ENCODE measurements at regions of chr15 and their contacts with region 1.

Region 1: GRCh38 chr15:59622289-59622688 is 10.7 kb downstream of the GCNT3 start:
- DNase-seq: peak; percentile 86 to 96
- ATAC-seq: peak; percentile 92 to 96
- H3K4me3 ChIP-seq: no peak overlapping the region
- H3K27ac ChIP-seq: no peak overlapping the region; a peak in 2 of 6 replicates
- H3K4me1 ChIP-seq: peaks cover 21% of the 10 kb centered on the region
- CTCF ChIP-seq: peak; percentile 74
- EP300 ChIP-seq: no peak
- POLR2A ChIP-seq: no peak
- RAD21 ChIP-seq: peak; percentile 85 to 91

Region 2: GRCh38 chr15:59096429-59096828 is 525.9 kb before region 1 on chr15:
- CTCF ChIA-PET with region 1: no interaction called
- POLR2A ChIA-PET with region 1: no interaction called
- DNase-seq: no peak
- ATAC-seq: no peak
- H3K4me3 ChIP-seq: no peak overlapping the region
- H3K27ac ChIP-seq: no peak overlapping the region
- H3K4me1 ChIP-seq: no peaks in the 10 kb centered on the region
- CTCF ChIP-seq: no peak
- EP300 ChIP-seq: no peak
- POLR2A ChIP-seq: no peak
- RAD21 ChIP-seq: no peak

Region 3: GRCh38 chr15:59313641-59314332 is 308.5 kb before region 1 on chr15:
- CTCF ChIA-PET with region 1: no interaction called
- POLR2A ChIA-PET with region 1: no interaction called
- DNase-seq: peak; percentile 67 to 77
- ATAC-seq: peak; percentile 66 to 81
- H3K4me3 ChIP-seq: no peak overlapping the region
- H3K27ac ChIP-seq: peak overlapping the region; percentile 68 to 85
- H3K4me1 ChIP-seq: peaks cover 97% of the 10 kb centered on the region
- CTCF ChIP-seq: no peak
- EP300 ChIP-seq: no peak
- POLR2A ChIP-seq: no peak
- RAD21 ChIP-seq: 0 out of 5 replicates have a peak, but pooled peaks of 1 of the 2 experiments have one; percentile 13

Region 4: GRCh38 chr15:59492389-59493377 is 129.6 kb before region 1 on chr15:
- CTCF ChIA-PET with region 1: no interaction called
- POLR2A ChIA-PET with region 1: no interaction called
- DNase-seq: peak; percentile 61 to 81
- ATAC-seq: peak; percentile 95 to 98
- H3K4me3 ChIP-seq: no peak overlapping the region
- H3K27ac ChIP-seq: peak overlapping the region; percentile 55 to 71
- H3K4me1 ChIP-seq: peaks cover 9% of the 10 kb centered on the region
- CTCF ChIP-seq: peak; percentile 98
- EP300 ChIP-seq: no peak
- POLR2A ChIP-seq: no peak
- RAD21 ChIP-seq: peak; percentile 100

Region 5: GRCh38 chr15:59537403-59537802 is 84.9 kb before region 1 on chr15:
- CTCF ChIA-PET with region 1: interaction called, 154 read pairs
- POLR2A ChIA-PET with region 1: interaction called, 5 read pairs
- DNase-seq: no peak
- ATAC-seq: no peak
- H3K4me3 ChIP-seq: no peak overlapping the region
- H3K27ac ChIP-seq: no peak overlapping the region
- H3K4me1 ChIP-seq: peaks cover 13% of the 10 kb centered on the region; the same call in 2 of the 3 replicates
- CTCF ChIP-seq: no peak
- EP300 ChIP-seq: no peak
- POLR2A ChIP-seq: no peak
- RAD21 ChIP-seq: no peak

Region 6: DNA sequence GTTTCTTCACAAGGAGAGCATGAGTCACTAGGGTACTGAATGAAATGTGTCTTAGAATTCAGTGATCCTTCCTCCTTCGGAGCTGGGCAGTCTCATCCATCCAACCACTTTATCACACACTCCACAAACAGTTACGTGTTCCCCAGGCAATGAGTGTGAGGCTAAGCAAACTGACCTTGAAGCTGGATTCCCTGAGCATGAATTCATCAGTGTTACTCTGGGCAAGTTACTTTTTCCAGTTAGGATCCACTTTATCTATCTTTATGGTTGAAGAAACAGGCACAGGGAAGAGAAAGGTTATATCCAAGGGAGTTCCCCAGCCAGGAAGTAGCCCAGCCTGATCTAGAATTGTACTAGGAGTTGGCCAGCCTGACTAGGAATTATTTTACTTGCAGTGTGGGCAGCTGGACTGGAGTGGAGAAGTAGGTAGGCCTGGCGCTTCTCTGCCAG is 27.8 kb before region 1 on chr15:
- CTCF ChIA-PET with region 1: interaction called, 14 read pairs
- POLR2A ChIA-PET with region 1: interaction called, 3 read pairs
- DNase-seq: peak; percentile 97 to 98
- ATAC-seq: peak; percentile 94 to 95
- H3K4me3 ChIP-seq: no peak overlapping the region
- H3K27ac ChIP-seq: peak overlapping the region; percentile 86 to 92
- H3K4me1 ChIP-seq: peaks cover 40% of the 10 kb centered on the region
- CTCF ChIP-seq: no peak
- EP300 ChIP-seq: peak in 1 of 2 experiments; percentile 47; a peak in 1 of 5 replicates
- POLR2A ChIP-seq: no peak
- RAD21 ChIP-seq: peak; percentile 15 to 42; a peak in 3 of 5 replicates

Region 7: DNA sequence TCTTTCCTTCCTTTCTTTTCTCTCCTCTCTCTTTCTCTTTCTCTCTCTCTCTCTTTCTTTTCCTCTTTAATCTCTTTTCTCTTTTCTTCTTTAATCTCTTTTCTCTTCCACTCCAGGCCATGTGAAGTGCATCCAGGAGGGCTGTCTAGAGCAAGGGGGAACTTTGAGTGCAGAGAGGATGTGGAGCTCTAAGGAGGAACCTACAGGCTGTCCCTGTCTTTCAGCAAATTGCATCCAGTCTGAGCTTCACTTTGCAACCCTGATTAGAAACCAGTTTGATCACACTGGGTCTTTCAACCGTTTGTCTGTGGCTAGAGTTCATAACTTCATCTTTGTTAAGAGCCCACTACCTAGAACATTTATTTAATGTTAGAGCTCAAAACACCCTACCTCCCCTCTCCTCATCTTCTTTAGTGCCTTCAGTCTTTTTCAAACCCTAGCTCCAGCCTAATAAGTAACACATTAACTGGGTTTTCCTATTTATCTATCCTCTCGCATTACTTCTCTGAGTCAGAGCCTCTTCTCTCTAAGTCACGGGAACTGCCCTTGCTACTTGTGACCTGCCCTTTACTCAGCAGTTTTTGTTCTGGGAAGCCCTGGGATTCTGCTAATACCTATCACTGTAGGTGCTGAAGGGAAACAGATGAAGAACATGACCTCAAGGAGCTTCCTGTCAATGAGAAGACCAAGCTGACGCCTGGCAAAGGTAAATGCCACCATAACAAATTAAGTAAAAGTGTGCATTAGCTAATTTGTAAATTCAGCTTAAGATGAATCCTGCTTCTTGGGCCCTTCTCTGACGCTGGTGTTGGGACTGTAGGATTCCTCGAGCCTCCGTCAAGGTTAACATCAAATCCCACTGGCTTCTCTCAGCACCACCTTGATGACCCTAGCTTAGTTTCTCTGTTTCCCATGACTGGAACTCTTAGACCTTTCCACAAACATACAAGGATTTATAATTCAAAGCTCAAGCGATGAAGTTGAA is 10.7 kb before region 1 on chr15 and contains the start of gene GCNT3:
- CTCF ChIA-PET with region 1: interaction called, 40 read pairs
- POLR2A ChIA-PET with region 1: interaction called, 5 read pairs
- DNase-seq: peak; percentile 96 to 97
- ATAC-seq: peak; percentile 93 to 95
- H3K4me3 ChIP-seq: peak within 1 kb of the TSS; percentile 65
- H3K27ac ChIP-seq: peak within 1 kb of the TSS; percentile 95 to 96
- H3K4me1 ChIP-seq: peaks cover 39% of the 10 kb centered on the region
- CTCF ChIP-seq: no peak
- EP300 ChIP-seq: peak in 1 of 2 experiments; percentile 45; a peak in 1 of 5 replicates
- POLR2A ChIP-seq: peak; percentile 30
- RAD21 ChIP-seq: 0 out of 5 replicates have a peak, but pooled peaks of 1 of the 2 experiments have one; percentile 20
- polyA plus RNA-seq, gene GCNT3: 134 and 153 TPM in 2 replicates

Region 8: GRCh38 chr15:59632714-59633113 is 10.4 kb after region 1 on chr15:
- CTCF ChIA-PET with region 1: interaction called, 72 read pairs
- POLR2A ChIA-PET with region 1: interaction called, 3 read pairs
- DNase-seq: peak; percentile 54 to 68
- ATAC-seq: peak; percentile 90
- H3K4me3 ChIP-seq: no peak overlapping the region
- H3K27ac ChIP-seq: no peak overlapping the region
- H3K4me1 ChIP-seq: peaks cover 7% of the 10 kb centered on the region; the same call in 1 of the 3 replicates
- CTCF ChIP-seq: peak; percentile 63
- EP300 ChIP-seq: no peak
- POLR2A ChIP-seq: no peak
- RAD21 ChIP-seq: peak; percentile 64 to 84

Region 9: GRCh38 chr15:59642351-59642750 is 20.1 kb after region 1 on chr15:
- CTCF ChIA-PET with region 1: interaction called, 72 read pairs
- POLR2A ChIA-PET with region 1: no interaction called
- DNase-seq: no peak
- ATAC-seq: no peak
- H3K4me3 ChIP-seq: no peak overlapping the region
- H3K27ac ChIP-seq: no peak overlapping the region
- H3K4me1 ChIP-seq: peaks cover 6% of the 10 kb centered on the region
- CTCF ChIP-seq: peak; percentile 49
- EP300 ChIP-seq: no peak
- POLR2A ChIP-seq: no peak
- RAD21 ChIP-seq: peak; percentile 28 to 52; a peak in 3 of 5 replicates

Region 10: GRCh38 chr15:60021589-60022378 is 399.5 kb after region 1 on chr15:
- CTCF ChIA-PET with region 1: no interaction called
- POLR2A ChIA-PET with region 1: no interaction called
- DNase-seq: no peak
- ATAC-seq: no peak
- H3K4me3 ChIP-seq: no peak overlapping the region
- H3K27ac ChIP-seq: no peak overlapping the region
- H3K4me1 ChIP-seq: no peaks in the 10 kb centered on the region
- CTCF ChIP-seq: no peak
- EP300 ChIP-seq: no peak
- POLR2A ChIP-seq: no peak
- RAD21 ChIP-seq: no peak

Measured in A549 (cell line).